ENCODE measurements at regions of chr10 and their contacts with region 1.

Region 1: GRCh38 chr10:72048450-72049124 is 39.8 kb downstream of the SPOCK2 start:
- DNase-seq: peak; percentile 95
- H3K4me3 ChIP-seq: no peak overlapping the region
- H3K27ac ChIP-seq: no peak overlapping the region
- H3K4me1 ChIP-seq: peaks cover 0 to 12% (median 8%) of the 10 kb centered on the region in 4 donors
- H3K27me3 ChIP-seq: no peaks in the 10 kb centered on the region
- CTCF ChIP-seq: peak; percentile 97 to 100 (median 99)
- EP300 ChIP-seq: no peak
- POLR2A ChIP-seq: no peak

Region 2: GRCh38 chr10:71314028-71314693 is 734.4 kb before region 1 on chr10:
- intact Hi-C with region 1: loop called (anchors 5 kb)
- DNase-seq: peak; percentile 80
- H3K4me3 ChIP-seq: peak overlapping the region in 1 of 4 donors; percentile 6
- H3K27ac ChIP-seq: peak overlapping the region; percentile 62 to 73 (median 66)
- H3K4me1 ChIP-seq: peaks cover 0 to 33% (median 29%) of the 10 kb centered on the region in 4 donors
- H3K27me3 ChIP-seq: no peaks in the 10 kb centered on the region
- CTCF ChIP-seq: peak; percentile 66 to 88 (median 72)
- EP300 ChIP-seq: no peak
- POLR2A ChIP-seq: no peak

Region 3: DNA sequence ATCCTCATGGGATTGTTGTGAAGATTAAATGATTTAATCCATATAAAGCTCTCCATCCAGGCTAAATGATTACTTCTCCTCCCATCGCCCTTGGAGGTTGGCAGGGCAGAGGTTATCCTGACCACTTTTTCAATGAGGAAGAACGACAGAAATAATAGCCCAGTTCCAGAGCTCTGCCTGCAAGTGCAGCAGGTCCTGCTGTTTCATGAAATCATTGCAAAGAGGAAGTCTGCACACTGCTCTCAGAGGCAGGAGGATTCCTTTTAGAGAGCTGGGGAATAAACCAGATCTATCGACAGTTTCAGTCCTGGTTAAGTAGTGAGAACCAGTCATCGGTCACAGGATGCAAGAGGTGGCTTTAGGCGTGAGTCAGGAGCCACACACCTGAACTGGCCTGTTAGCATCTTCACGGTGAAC is 676.8 kb before region 1 on chr10:
- intact Hi-C with region 1: loop called (anchors 10 kb)
- DNase-seq: no peak
- H3K4me3 ChIP-seq: no peak overlapping the region
- H3K27ac ChIP-seq: peak overlapping the region in 1 of 4 donors; percentile 5
- H3K4me1 ChIP-seq: peaks cover 0 to 2% (median 2%) of the 10 kb centered on the region in 4 donors
- H3K27me3 ChIP-seq: no peaks in the 10 kb centered on the region
- CTCF ChIP-seq: no peak
- EP300 ChIP-seq: no peak
- POLR2A ChIP-seq: no peak

Region 4: GRCh38 chr10:71893920-71894319 is 154.7 kb before region 1 on chr10:
- intact Hi-C with region 1: loop called (anchors 2 kb)
- DNase-seq: no peak
- H3K4me3 ChIP-seq: no peak overlapping the region
- H3K27ac ChIP-seq: no peak overlapping the region
- H3K4me1 ChIP-seq: peaks cover 0 to 14% (median 10%) of the 10 kb centered on the region in 4 donors
- H3K27me3 ChIP-seq: no peaks in the 10 kb centered on the region
- CTCF ChIP-seq: no peak
- EP300 ChIP-seq: no peak
- POLR2A ChIP-seq: no peak

Region 5: DNA sequence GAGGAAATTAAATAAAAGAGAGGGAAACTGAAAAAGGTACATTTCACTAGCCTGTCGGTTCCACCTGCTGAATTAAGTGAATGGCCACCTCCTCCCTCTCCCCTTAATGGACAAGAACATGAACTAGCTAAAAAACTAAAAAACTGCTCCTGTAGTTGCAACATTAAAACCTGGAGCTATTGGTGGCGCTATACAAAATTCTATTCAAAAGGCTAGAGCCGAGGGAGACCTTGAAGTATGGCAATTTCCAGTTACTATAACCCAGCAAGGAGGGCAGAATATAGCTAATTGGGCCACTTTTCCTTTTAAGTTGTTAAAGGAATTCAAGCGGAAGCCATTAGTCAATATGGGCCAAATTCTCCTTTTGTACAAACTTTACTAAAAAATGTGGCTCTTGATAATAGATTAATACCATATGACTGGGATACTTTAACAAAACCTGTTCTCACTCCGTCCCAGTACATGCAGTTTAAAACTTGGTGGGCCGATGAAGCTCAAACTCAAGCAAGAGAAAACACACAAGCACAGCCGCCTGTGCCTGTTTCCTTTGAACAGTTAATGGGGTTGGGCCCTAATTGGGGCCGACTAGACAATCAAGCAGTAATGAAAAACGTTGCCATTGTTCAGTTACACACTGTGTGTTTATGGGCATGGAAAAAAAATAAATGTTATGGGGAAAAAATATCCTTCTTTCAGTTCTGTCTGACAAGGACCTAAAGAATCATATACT is 90.9 kb before region 1 on chr10:
- intact Hi-C with region 1: loop called (anchors 1 kb)
- DNase-seq: no peak
- H3K4me3 ChIP-seq: no peak overlapping the region
- H3K27ac ChIP-seq: no peak overlapping the region
- H3K4me1 ChIP-seq: peaks cover 0 to 7% (median 4%) of the 10 kb centered on the region in 4 donors
- H3K27me3 ChIP-seq: no peaks in the 10 kb centered on the region
- CTCF ChIP-seq: no peak
- EP300 ChIP-seq: no peak
- POLR2A ChIP-seq: no peak

Region 6: DNA sequence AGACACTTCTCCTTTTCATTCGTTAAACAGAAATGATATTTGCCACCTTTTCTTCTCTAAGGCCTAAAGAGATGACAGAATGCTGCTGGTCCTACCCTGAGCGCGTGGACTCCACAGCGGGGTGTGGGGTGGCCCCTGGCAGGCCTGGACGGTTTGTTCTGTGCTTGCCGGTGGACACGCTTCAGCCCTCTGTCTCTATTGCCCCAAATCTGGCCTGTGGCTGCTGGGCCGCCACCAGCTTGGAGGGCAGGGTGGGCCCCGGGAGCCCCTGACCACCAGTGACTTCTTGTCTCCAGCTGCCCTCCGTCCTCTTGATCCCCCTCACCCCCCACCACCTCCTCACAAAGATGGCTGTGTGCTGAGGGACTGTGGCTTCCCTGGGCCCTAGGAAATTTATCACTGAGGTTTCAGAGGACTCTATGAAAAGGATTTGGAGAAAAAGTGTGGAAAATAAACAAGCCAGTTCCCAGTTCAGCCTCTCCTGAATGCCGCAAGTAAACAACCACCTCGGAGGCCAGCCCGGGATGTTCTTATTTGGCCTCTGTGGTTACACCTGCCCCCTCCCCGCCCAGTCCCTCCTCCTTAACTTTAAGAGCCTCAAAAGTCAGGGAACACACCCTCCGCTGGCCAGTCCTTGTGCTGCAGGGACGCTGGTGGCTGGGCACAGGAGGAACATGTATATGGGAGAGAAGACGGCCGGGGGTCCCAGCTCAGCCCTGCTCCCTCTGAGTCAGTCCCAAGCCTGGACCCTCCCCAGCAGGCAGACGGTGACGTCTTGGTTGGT is 78.5 kb before region 1 on chr10:
- intact Hi-C with region 1: no loop called
- DNase-seq: peak; percentile 75
- H3K4me3 ChIP-seq: no peak overlapping the region
- H3K27ac ChIP-seq: peak overlapping the region; percentile 29 to 92 (median 60)
- H3K4me1 ChIP-seq: peaks cover 0 to 96% (median 94%) of the 10 kb centered on the region in 4 donors
- H3K27me3 ChIP-seq: no peaks in the 10 kb centered on the region
- CTCF ChIP-seq: peak in 2 of 4 experiments; percentile 17 to 19
- EP300 ChIP-seq: no peak
- POLR2A ChIP-seq: no peak

Region 7: DNA sequence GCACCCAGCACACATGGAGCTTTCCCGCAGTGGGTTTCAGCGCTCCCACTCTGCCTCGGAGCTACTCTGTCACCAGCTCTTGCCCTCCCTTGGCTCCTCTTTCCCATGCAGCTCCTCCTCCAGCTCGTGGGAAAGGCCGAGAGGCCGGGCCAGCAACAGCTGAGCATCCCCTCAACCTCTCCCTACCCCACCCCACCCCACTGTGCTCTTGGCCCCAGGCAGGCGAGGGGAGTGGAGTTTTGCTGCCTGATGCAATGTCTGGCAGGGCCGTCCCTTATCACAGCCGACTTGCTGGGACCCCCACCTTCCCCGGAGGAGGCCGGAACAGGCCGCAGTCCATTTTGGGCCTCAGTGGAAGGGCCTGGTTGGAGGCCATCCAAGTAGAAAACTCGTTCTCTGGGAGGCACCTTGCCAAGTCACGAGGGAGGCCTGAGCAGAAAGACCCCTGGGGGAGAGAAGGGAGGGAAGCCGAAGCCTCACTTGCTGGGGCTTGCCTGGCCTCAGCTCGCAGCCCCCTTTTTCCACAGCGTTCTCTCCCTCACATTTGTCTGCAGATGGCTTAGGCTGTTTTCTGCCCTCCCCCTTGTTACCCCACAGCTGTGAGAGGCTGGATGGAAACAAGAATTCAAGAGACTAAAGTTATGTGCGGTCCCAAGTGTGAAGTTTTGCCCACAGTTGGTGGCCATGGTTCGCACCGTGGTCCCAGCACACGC is 49.1 kb before region 1 on chr10:
- intact Hi-C with region 1: no loop called
- DNase-seq: peak; percentile 94
- H3K4me3 ChIP-seq: no peak overlapping the region
- H3K27ac ChIP-seq: peak overlapping the region; percentile 75 to 88 (median 79)
- H3K4me1 ChIP-seq: peaks cover 0 to 72% (median 56%) of the 10 kb centered on the region in 4 donors
- H3K27me3 ChIP-seq: no peaks in the 10 kb centered on the region
- CTCF ChIP-seq: no peak
- EP300 ChIP-seq: no peak
- POLR2A ChIP-seq: no peak

Region 8: GRCh38 chr10:72215652-72216549 is 167.3 kb after region 1 on chr10 and contains the starts of genes ANAPC16 and ASCC1:
- intact Hi-C with region 1: loop called (anchors 5 kb)
- DNase-seq: peak; percentile 96
- H3K4me3 ChIP-seq: peak within 1 kb of the TSS; percentile 60 to 79 (median 70)
- H3K27ac ChIP-seq: peak within 1 kb of the TSS; percentile 86 to 99 (median 92)
- H3K4me1 ChIP-seq: peaks cover 0 to 51% (median 34%) of the 10 kb centered on the region in 4 donors
- H3K27me3 ChIP-seq: no peaks in the 10 kb centered on the region
- CTCF ChIP-seq: no peak
- EP300 ChIP-seq: peak in 1 of 4 donors; percentile 87
- POLR2A ChIP-seq: peak; percentile 88 to 95
- total RNA-seq, gene ANAPC16: 80.0 to 228 (median 157) TPM
- total RNA-seq, gene ASCC1: 21.0 to 53.7 (median 37.1) TPM

Region 9: GRCh38 chr10:72331601-72332422 is 283.2 kb after region 1 on chr10:
- intact Hi-C with region 1: loop called (anchors 5 kb)
- DNase-seq: peak; percentile 91
- H3K4me3 ChIP-seq: peak overlapping the region in 1 of 4 donors; percentile 14
- H3K27ac ChIP-seq: peak overlapping the region; percentile 75 to 87 (median 80)
- H3K4me1 ChIP-seq: peaks cover 0 to 69% (median 60%) of the 10 kb centered on the region in 4 donors
- H3K27me3 ChIP-seq: no peaks in the 10 kb centered on the region
- CTCF ChIP-seq: peak; percentile 10 to 47 (median 34)
- EP300 ChIP-seq: no peak
- POLR2A ChIP-seq: no peak

Region 10: DNA sequence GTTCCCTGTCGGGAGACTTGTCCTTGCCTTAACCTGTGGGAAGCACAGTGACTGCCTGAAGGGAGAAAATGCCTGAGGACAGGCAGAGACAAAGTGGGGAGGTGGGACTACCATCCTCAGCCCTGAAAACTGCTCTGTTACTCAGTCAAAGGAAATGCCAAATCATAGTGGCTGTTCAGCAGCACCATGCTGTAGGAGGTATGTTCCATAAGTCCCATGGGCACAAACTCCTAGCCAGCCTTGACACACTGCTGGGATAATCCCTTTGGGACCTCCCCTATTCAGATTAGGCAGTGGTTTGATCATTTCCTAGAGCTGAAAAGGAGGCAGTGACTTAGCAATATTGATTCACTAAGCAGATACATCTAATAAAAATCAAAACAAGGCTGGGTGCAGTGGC is 723.4 kb after region 1 on chr10:
- intact Hi-C with region 1: no loop called
- DNase-seq: no peak
- H3K4me3 ChIP-seq: no peak overlapping the region
- H3K27ac ChIP-seq: no peak overlapping the region
- H3K4me1 ChIP-seq: no peaks in the 10 kb centered on the region
- H3K27me3 ChIP-seq: no peaks in the 10 kb centered on the region
- CTCF ChIP-seq: no peak
- EP300 ChIP-seq: no peak
- POLR2A ChIP-seq: no peak

Measured in sigmoid colon (tissue), 7 donors.